Right ventricle myocardium inferior (tissue), 1 donor: ENCODE measurements at regions of chr11 and their contacts with region 1.

Region 1: GRCh38 chr11:35617687-35618496 is at the start of gene FJX1:
- DNase-seq: peak; percentile 77
- ATAC-seq: peak; percentile 64
- total RNA-seq, gene FJX1: 0.54 TPM

Region 2: DNA sequence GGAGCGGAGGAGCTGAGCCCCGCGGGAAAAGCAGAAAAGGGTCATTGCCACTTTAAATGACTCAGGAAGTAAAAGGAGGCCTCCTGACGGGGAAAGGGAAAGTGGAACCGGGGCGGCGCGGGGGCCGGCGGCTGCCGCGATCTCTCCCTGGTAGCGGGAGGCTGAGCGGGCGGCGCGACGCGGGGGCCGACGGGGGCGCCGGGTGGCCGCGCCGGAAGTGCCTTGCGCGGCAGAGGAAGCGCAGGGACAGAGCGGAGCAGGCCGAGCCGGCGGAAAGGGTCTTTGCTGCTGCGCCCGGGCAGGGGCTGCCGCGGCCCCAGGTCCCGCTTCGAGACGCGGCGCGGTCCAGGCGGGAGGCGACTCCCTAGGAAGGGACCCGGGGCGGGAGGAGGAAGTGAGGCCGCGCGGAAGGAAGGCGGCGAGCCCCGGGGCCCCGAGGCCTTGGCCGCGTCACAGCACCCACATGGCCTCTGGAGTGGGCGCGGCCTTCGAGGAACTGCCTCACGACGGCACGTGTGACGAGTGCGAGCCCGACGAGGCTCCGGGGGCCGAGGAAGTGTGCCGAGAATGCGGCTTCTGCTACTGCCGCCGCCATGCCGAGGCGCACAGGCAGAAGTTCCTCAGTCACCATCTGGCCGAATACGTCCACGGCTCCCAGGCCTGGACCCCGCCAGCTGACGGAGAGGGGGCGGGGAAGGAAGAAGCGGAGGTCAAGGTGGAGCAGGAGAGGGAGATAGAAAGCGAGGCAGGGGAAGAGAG is 44.9 kb after region 1 on chr11 and contains the start of gene TRIM44:
- intact Hi-C with region 1: loop called (anchors 2 kb)
- DNase-seq: peak; percentile 90
- ATAC-seq: peak; percentile 96
- total RNA-seq, gene TRIM44: 39.9 TPM

Region 3: GRCh38 chr11:36041988-36042611 is 424.2 kb after region 1 on chr11:
- intact Hi-C with region 1: loop called (anchors 5 kb)
- DNase-seq: no peak
- ATAC-seq: no peak

Region 4: DNA sequence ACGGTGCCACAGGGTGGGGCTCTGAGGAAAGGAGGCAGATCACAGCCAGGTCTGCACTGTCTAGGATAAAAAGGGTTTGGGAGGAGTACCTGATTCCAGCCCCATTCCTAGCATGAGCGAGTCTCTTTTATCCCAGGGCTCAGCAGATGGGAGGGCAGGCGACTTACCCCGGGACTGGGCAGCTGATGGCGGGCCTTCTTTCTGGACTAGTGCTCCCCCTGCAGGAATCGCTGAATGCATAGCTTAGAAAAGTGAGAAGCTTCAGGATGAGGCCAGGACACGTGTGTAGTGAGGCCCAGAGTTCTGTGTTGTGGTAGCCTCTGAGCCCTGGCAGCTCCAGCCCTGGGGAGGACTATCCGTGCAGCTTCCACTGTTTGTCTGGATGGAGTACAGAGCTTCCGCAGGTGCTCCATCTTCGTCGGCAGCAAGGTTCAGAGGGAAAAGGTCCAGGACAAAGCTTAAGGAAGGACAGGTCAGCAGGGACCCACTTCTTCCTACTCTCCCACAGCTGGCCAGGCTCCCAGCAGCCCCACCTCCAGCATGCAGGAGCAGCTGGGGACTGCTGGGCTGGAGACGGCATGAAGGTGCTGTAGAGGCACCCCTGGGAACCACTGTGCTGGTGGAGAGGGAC is 641.0 kb after region 1 on chr11:
- intact Hi-C with region 1: loop called (anchors 1 kb)
- DNase-seq: no peak
- ATAC-seq: peak; percentile 60

Region 5: GRCh38 chr11:36478700-36479329 is 860.9 kb after region 1 on chr11:
- intact Hi-C with region 1: loop called (anchors 5 kb)
- DNase-seq: no peak
- ATAC-seq: peak; percentile 64